Cardiac septum (tissue), 1 donor: ENCODE measurements at regions of chr11 and their contacts with region 1.

Region 1: DNA sequence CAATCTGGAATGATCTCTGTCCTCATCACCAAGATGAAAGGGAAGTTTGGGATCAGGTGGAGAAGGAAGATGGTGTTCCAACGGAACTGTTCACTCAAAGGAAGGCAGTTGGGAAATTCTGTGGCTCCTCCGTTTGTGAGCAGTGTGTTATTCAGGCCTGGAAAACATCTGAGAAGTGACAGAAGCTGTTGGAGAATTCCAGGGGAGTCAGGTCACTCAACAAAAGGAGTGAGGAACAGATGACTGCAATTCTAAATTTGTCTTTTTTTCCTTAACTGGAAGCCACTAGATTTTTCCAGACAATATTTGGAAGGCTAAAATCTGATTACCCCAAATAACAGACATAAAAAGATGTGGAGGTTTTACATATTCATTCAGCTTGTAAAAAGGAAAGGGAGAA is 107.8 kb downstream of the CD44 start:
- DNase-seq: no peak

Region 2: GRCh38 chr11:35040221-35040942 is 206.4 kb before region 1 on chr11:
- intact Hi-C with region 1: loop called (anchors 5 kb)
- DNase-seq: no peak

Region 3: DNA sequence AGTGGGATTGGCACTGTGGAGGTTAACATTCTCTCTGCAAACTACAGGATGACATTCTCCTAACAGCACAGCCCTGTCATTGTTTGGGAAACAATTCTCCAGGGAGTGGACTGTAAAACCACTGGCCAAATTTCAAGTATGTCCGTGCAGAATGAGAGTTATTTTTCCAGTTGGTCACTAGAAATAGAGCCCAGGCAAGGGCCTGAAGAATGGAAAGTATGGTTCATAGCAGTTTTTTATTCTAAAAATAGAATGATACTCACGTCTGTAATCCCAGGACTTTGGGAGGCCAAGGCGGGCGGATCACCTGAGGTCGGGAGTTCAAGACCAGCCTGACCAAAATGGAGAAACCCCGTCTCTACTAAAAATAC is 146.7 kb before region 1 on chr11:
- intact Hi-C with region 1: loop called (anchors 5 kb)
- DNase-seq: no peak

Region 4: GRCh38 chr11:35363854-35364780 is 117.4 kb after region 1 on chr11:
- intact Hi-C with region 1: loop called (anchors 5 kb)
- DNase-seq: no peak

Region 5: DNA sequence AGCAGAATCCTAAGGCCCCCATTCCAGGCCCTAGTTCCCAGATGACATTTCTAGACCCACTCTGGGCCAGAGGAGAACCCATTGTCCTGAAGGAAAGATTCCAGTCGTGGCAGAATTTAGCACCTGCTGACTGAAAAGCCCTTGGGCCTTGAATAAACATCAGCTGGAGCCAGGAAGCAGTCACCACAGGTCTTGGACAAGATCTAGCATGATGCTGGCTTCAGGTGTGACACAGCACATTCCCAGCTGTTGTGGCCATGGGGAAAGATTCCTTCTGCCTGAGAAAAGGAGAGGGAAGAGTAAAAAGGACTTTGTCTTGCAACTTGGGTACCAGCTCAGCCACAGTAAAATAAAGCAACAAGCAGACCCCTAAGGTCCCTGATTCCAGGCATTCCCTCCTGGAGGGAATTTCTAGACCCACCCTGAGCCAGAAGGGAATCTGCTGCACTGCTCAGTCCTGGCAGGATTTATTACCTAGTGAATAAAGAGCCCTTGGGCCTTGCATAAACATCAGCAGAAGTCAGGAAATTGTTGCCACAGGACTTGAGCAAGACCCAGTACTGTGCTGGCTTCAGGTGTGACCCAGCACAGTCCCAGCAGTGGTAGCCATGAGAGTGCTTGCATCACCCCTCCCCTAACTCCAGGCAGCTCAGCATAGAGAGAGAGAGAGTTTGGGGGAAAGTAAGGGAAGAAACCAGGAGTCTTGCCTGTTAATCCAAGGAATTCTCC is 321.2 kb after region 1 on chr11:
- intact Hi-C with region 1: no loop called
- DNase-seq: no peak